Tibial artery (tissue), 4 donors: ENCODE measurements at regions of chr5 and their contacts with region 1.

Region 1: GRCh38 chr5:163347671-163348070 is 89.7 kb upstream of the CCNG1 start:
- DNase-seq: peak in 1 of 2 donors; percentile 30
- H3K4me3 ChIP-seq: no peak overlapping the region
- H3K27ac ChIP-seq: no peak overlapping the region
- H3K4me1 ChIP-seq: no peaks in the 10 kb centered on the region
- H3K27me3 ChIP-seq: peaks cover 0 to 4% of the 10 kb centered on the region in 2 donors
- CTCF ChIP-seq: peak; percentile 44 to 58

Region 2: DNA sequence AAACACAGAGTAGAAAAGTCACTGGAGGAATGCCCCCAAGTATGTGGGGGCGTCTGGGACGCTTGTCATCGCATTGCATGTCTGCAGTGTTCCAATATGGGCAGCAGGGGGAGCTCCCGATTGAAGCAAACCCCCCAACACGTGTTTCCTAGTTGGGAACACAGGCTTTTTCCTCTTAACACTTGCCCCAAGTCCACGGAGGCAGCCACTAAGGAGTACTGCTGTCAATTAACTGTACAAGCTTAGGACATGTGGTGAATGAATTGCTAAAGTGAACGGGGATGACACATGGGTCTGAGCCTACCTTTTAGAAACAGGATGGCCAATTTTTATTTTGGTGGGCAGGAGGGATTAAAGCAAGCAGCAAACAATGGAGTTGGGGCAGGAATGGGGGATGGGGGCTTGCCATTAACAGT is 1803.3 kb before region 1 on chr5:
- intact Hi-C with region 1: loop called (anchors 10 kb)
- DNase-seq: peak in 1 of 2 donors; percentile 25
- H3K4me3 ChIP-seq: no peak overlapping the region
- H3K27ac ChIP-seq: no peak overlapping the region
- H3K4me1 ChIP-seq: peaks cover 0 to 35% (median 20%) of the 10 kb centered on the region in 4 donors
- H3K27me3 ChIP-seq: peaks cover 3 to 54% of the 10 kb centered on the region in 2 donors
- CTCF ChIP-seq: peak; percentile 38 to 54

Region 3: GRCh38 chr5:163614787-163615186 is 267.1 kb after region 1 on chr5:
- intact Hi-C with region 1: no loop called
- DNase-seq: no peak
- H3K4me3 ChIP-seq: no peak overlapping the region
- H3K27ac ChIP-seq: no peak overlapping the region
- H3K4me1 ChIP-seq: no peaks in the 10 kb centered on the region
- H3K27me3 ChIP-seq: no peaks in the 10 kb centered on the region
- CTCF ChIP-seq: no peak